Activated naive CD4-positive, alpha-beta T cell treated with anti-CD3 and anti-CD28 coated beads for 36 hours (primary cell): ENCODE measurements at regions of chr1 and their contacts with region 1.

Region 1: GRCh38 chr1:161864577-161864976 is 98.5 kb downstream of the ATF6 start:
- DNase-seq: peak; percentile 17
- H3K4me3 Mint-ChIP-seq: no peak overlapping the region
- H3K27ac Mint-ChIP-seq: no peak overlapping the region
- H3K4me1 Mint-ChIP-seq: no peaks in the 10 kb centered on the region
- H3K27me3 Mint-ChIP-seq: no peaks in the 10 kb centered on the region

Region 2: GRCh38 chr1:161726596-161727457 is 137.8 kb before region 1 on chr1:
- CTCF ChIA-PET with region 1: no interaction called
- intact Hi-C with region 1: no loop called
- DNase-seq: peak; percentile 69
- H3K4me3 Mint-ChIP-seq: peak overlapping the region; percentile 76
- H3K27ac Mint-ChIP-seq: no peak overlapping the region
- H3K4me1 Mint-ChIP-seq: peaks cover 44% of the 10 kb centered on the region
- H3K27me3 Mint-ChIP-seq: peaks cover 6% of the 10 kb centered on the region

Region 3: DNA sequence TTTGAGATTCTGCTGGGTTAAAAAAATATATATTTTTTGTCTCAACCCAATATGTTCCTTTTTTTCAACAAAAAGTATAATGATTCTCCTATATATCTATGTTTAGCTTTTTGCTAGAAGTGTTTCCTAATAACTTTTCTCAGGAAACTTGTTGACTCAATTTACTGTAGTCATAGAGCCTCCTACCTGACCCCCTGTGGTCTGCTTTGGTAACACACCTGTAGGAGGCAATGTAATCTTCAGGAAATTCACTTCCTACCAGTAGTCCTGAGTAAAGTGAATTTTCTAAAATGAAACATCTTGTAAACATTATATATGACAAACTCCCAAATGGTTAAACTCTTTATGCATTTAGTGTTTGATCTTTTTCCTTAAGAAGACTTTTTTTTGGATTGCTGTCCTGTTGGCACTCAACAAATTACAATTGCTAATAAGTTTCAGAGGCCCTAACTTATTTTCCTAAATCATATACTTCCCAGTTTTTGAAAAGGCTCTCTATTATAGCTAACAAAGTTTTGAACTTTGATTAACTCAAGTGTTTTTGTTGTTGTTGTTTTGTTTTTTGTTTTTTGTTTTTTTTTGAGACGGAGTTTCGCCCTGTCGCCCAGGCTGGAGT is 40.8 kb after region 1 on chr1:
- CTCF ChIA-PET with region 1: interaction called, 3 read pairs
- intact Hi-C with region 1: loop called (anchors 2 kb)
- DNase-seq: peak; percentile 60
- H3K4me3 Mint-ChIP-seq: no peak overlapping the region
- H3K27ac Mint-ChIP-seq: no peak overlapping the region
- H3K4me1 Mint-ChIP-seq: peaks cover 41% of the 10 kb centered on the region
- H3K27me3 Mint-ChIP-seq: no peaks in the 10 kb centered on the region

Region 4: DNA sequence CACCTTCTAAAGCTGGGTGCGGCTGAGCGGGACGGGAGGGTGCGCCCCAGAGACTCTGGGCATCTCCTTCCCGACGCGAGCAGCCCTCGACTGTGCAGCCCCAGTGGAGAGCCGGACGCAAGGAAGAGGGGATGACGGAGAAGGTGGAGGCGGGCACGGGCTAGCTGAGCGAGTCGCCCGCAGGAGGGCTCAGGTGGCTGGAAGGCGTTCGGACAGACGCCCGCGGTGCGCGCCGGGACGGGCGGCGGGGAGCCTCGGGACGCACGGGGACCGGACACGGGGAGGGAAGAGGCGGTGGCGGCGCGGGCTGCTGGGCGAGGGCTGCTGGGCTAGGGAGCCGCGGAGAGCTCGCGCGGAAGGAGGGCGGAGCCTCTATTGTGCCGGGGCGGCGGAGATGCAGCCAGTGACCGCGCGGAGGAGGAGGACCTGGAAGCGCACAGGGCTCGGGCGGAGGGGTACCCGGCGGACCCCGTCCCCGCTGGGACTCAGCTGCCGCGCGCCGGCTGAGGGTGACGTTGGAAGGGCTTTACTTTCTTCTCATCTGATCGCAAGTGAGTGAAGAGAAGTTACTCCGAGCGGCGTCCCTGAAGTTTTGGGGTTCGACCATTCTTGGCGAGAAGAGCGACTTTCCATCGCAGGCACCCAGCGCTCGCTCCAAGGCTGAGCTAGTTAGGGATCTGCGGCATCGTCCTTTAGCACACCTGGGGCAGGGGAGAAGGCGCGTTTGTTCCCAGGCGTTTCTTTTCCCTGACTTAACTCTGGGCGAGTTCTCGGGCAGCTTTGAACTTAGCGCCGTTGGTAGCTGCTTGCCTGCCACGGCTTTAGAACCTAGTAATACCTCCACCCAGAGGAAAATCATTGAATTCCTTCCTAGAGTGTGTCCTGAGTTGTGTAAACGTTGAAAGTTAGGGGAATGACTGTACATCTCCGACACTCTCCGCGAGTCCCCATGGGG is 159.2 kb after region 1 on chr1 and contains the start of gene OLFML2B:
- CTCF ChIA-PET with region 1: interaction called, 8 read pairs
- intact Hi-C with region 1: loop called (anchors 1 kb)
- DNase-seq: peak; percentile 65
- H3K4me3 Mint-ChIP-seq: peak within 1 kb of the TSS; percentile 86
- H3K27ac Mint-ChIP-seq: no peak within 1 kb of the TSS
- H3K4me1 Mint-ChIP-seq: peaks cover 7% of the 10 kb centered on the region
- H3K27me3 Mint-ChIP-seq: peaks cover 18% of the 10 kb centered on the region
- total RNA-seq, gene OLFML2B: 1.7 to 2.3 TPM

Region 5: DNA sequence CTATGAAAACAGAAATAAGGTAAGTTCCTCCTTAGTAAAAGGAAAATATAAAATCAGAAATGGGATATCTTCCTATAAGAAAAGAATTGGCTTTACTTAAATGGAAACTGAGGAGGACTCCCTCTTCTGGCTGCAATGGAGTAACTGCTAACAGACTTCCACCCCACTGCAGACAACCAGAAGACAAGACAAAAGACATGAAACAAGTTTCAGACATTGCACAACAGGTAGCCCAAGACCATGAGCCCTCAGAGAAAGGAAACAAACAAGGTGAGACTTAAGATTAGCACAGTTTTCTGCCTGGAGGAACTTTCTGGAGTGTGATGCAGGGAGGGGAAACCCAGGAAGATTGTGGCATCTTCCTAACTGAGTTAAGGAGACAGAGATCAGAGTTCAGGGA is 176.1 kb after region 1 on chr1:
- CTCF ChIA-PET with region 1: interaction called, 14 read pairs
- intact Hi-C with region 1: loop called (anchors 1 kb)
- DNase-seq: no peak
- H3K4me3 Mint-ChIP-seq: no peak overlapping the region
- H3K27ac Mint-ChIP-seq: no peak overlapping the region
- H3K4me1 Mint-ChIP-seq: peaks cover 4% of the 10 kb centered on the region
- H3K27me3 Mint-ChIP-seq: peaks cover 6% of the 10 kb centered on the region

Region 6: DNA sequence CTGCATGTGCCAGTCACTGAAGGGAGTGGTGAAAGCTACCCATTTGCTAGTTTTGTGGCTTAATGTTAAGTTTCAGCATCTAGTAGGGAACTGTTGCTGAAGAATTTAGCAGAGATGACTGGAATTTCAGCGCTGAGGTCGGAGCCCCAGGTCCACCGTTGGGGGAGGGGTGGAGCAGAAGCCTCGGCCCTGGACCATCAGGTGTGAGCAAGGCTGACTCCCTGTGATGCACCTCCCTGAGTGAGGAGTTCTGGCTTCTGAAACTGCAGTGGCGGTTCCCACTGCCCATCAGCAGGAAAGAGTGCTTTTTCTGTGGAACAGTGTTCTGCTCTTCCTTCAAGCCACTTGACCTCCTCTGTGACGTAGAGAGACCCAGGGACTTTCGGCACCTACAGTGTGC is 206.2 kb after region 1 on chr1:
- CTCF ChIA-PET with region 1: no interaction called
- intact Hi-C with region 1: no loop called
- DNase-seq: no peak
- H3K4me3 Mint-ChIP-seq: peak overlapping the region; percentile 78
- H3K27ac Mint-ChIP-seq: no peak overlapping the region
- H3K4me1 Mint-ChIP-seq: peaks cover 1% of the 10 kb centered on the region
- H3K27me3 Mint-ChIP-seq: peaks cover 51% of the 10 kb centered on the region